ENCODE measurements at regions of chr15 and their contacts with region 1.

Region 1: DNA sequence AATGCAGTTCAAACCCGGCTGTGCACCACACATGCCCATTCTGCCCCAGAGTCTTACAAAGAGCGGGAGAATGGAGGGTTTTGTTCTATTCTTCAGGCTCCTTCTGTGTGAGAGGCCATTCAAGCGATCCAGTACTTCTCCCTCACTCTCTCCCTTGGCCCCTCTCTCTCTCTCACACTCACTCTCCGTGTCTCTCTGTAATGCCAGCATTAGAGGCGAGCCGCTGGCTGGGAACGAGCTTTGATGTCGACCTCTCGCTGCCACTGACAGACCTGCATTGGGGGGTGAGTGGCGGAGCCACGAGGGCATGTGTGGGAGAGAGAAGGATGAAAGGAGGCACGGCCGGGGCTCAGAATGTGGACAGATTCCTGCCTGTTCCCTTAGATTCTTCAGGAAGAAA is 231.7 kb upstream of the ARRDC4 start:
- DNase-seq: no peak
- H3K4me3 ChIP-seq: no peak overlapping the region
- H3K27ac ChIP-seq: no peak overlapping the region
- H3K4me1 ChIP-seq: no peaks in the 10 kb centered on the region
- H3K27me3 ChIP-seq: peaks cover 63% of the 10 kb centered on the region
- CTCF ChIP-seq: no peak

Region 2: DNA sequence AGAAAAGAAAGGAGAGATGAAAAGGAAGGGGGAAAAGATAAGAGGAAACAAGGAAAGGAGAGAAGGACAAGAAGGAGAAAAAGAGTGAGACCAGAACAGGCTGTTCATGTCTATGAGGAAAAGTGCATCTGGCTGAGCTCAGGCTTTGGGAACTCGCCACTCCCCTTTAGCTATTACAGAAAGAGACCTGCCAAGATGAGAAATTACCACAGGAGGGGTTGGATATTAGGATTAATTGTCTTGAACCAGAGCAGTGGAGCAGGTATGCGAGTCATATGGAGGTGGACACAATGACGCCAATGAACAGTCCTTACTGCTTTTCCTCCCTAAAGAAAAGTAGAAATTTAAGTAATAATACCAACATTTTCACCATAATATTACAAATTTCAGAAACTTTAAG is 345.3 kb before region 1 on chr15:
- CTCF ChIA-PET with region 1: no interaction called
- POLR2A ChIA-PET with region 1: no interaction called
- intact Hi-C with region 1: loop called (anchors 5 kb)
- DNase-seq: no peak
- H3K4me3 ChIP-seq: no peak overlapping the region
- H3K27ac ChIP-seq: no peak overlapping the region
- H3K4me1 ChIP-seq: no peaks in the 10 kb centered on the region
- H3K27me3 ChIP-seq: no peaks in the 10 kb centered on the region
- CTCF ChIP-seq: no peak

Region 3: GRCh38 chr15:97962263-97962662 is 233.5 kb after region 1 on chr15:
- CTCF ChIA-PET with region 1: no interaction called
- POLR2A ChIA-PET with region 1: interaction called, 11 read pairs
- intact Hi-C with region 1: no loop called
- DNase-seq: no peak
- H3K4me3 ChIP-seq: peak overlapping the region; percentile 93; the same call in 1 of the 2 replicates
- H3K27ac ChIP-seq: no peak overlapping the region
- H3K4me1 ChIP-seq: peaks cover 16% of the 10 kb centered on the region
- H3K27me3 ChIP-seq: no peaks in the 10 kb centered on the region
- CTCF ChIP-seq: no peak

Measured in PC-9 (cell line).